ENCODE measurements at regions of chr15 and their contacts with region 1.

Region 1: GRCh38 chr15:57561041-57561711 is 30.5 kb upstream of the MYZAP start:
- DNase-seq: peak; percentile 96
- H3K4me3 ChIP-seq: peak overlapping the region in 1 of 3 experiments; percentile 37
- H3K27ac ChIP-seq: peak overlapping the region; percentile 97
- H3K4me1 ChIP-seq: peaks cover 15% of the 10 kb centered on the region
- H3K27me3 ChIP-seq: no peaks in the 10 kb centered on the region
- CTCF ChIP-seq: peak; percentile 79 to 89
- POLR2A ChIP-seq: no peak

Region 2: DNA sequence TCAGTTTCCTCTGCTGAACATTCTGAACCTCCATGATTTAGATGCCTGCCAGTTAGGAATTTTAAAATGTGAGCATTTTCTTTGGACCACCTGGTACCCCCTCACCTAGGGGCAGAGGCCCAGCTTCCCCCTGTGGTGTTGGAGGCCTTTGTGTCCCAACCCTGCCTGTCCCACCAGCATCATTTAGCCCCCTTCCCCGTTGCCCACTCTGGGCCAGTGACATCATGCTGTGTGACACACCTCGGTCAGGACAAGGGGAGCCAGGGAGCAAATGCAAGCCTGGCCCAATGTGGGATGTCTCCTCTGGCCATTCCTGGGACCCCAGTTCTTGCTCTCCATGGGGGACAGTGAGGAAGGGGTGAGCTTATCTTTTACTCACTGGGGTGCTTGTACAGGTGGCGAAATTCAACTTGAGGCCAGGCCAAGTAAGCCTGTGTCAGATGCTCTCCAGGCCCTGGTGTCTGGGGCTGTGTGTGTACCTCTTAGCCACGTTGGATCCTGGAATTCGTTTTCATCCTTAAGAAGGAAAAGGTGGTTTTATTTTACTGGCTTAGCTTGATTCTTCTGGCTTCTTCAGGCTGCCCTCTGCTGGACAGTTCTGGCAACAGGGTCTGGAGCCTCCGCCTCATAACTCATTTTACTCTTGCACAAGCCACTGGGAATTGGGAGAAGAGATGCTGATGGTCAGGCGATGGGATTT is 19.2 kb before region 1 on chr15:
- CTCF ChIA-PET with region 1: interaction called, 25 read pairs
- POLR2A ChIA-PET with region 1: no interaction called
- dilution Hi-C with region 1: no loop called
- intact Hi-C with region 1: no loop called
- DNase-seq: peak; percentile 77
- H3K4me3 ChIP-seq: no peak overlapping the region
- H3K27ac ChIP-seq: no peak overlapping the region
- H3K4me1 ChIP-seq: peaks cover 6% of the 10 kb centered on the region
- H3K27me3 ChIP-seq: no peaks in the 10 kb centered on the region
- CTCF ChIP-seq: peak; percentile 82 to 91
- POLR2A ChIP-seq: no peak

Region 3: DNA sequence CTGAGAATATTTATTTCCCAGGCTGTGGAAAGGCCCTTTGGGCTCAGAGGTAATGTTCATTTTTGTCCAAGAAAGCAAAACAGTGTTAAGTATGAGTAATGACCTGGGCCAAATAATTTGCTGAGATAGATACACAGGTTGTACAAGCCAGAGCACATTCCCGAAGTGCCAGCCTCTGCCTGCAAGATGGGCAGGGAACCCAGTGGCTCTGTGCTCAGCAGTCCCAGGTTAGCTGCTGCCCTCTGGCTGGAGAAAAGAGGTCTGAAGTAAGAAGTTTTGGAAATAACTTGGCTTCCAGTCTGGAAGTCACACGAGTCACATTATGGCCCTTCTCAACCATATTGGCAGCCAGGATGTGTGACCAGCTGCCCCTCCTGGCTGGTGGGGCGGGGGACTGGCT is 50.8 kb after region 1 on chr15:
- CTCF ChIA-PET with region 1: interaction called, 64 read pairs
- POLR2A ChIA-PET with region 1: no interaction called
- dilution Hi-C with region 1: no loop called
- intact Hi-C with region 1: loop called (anchors 1 kb)
- DNase-seq: peak; percentile 73
- H3K4me3 ChIP-seq: no peak overlapping the region
- H3K27ac ChIP-seq: no peak overlapping the region
- H3K4me1 ChIP-seq: peaks cover 25% of the 10 kb centered on the region
- H3K27me3 ChIP-seq: no peaks in the 10 kb centered on the region
- CTCF ChIP-seq: peak in 1 of 2 donors; percentile 40
- POLR2A ChIP-seq: no peak

Region 4: GRCh38 chr15:57640935-57641682 is 79.9 kb after region 1 on chr15:
- CTCF ChIA-PET with region 1: interaction called, 29 read pairs
- POLR2A ChIA-PET with region 1: no interaction called
- dilution Hi-C with region 1: no loop called
- intact Hi-C with region 1: loop called (anchors 1 kb)
- DNase-seq: peak; percentile 41
- H3K4me3 ChIP-seq: no peak overlapping the region
- H3K27ac ChIP-seq: no peak overlapping the region
- H3K4me1 ChIP-seq: no peaks in the 10 kb centered on the region
- H3K27me3 ChIP-seq: no peaks in the 10 kb centered on the region
- CTCF ChIP-seq: peak; percentile 32 to 46
- POLR2A ChIP-seq: no peak

Region 5: DNA sequence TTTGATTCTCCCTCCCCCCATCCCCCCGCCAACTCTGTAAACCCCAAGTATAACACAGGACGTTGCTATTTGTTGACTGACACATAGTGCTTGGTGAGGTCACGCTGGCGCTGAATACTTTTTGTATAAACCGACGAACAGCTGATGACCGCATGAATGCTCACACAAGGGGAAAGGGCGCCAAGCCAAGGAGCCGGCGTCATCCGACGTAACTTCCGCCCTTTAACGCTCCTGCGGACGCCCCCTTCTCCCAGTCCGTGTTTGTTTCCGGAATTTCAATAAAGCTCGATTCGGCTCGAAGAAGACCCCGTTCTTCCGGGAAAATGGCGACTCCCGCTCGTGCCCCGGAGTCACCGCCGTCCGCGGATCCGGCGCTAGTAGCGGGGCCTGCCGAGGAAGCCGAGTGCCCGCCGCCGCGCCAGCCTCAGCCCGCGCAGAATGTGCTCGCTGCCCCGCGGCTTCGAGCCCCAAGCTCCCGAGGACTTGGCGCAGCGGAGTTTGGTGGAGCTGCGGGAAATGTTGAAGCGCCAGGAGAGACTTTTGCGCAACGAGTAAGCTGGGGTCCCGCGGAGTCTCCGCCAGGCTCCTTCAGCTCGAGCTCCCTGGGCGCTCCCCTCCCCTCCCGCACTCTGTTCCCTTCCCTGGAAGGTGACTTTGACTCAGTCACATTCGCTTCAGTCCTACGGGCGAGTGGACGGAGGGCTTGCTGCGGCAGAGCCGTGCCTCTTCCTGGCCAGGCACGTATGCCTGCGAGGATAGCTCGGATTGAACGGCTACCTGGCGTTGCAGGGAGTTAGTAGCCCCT is 145.4 kb after region 1 on chr15 and contains the start of gene POLR2M:
- CTCF ChIA-PET with region 1: interaction called, 33 read pairs
- POLR2A ChIA-PET with region 1: no interaction called
- dilution Hi-C with region 1: no loop called
- intact Hi-C with region 1: loop called (anchors 1 kb)
- DNase-seq: peak; percentile 99
- H3K4me3 ChIP-seq: peak within 1 kb of the TSS; percentile 18 to 71 (median 59)
- H3K27ac ChIP-seq: peak within 1 kb of the TSS; percentile 74
- H3K4me1 ChIP-seq: peaks cover 16% of the 10 kb centered on the region
- H3K27me3 ChIP-seq: no peaks in the 10 kb centered on the region
- CTCF ChIP-seq: no peak
- POLR2A ChIP-seq: peak; percentile 63
- total RNA-seq, gene POLR2M: 42.5 and 50.6 TPM in 2 replicates

Region 6: GRCh38 chr15:57861036-57861638 is 300.0 kb after region 1 on chr15:
- CTCF ChIA-PET with region 1: interaction called, 21 read pairs
- POLR2A ChIA-PET with region 1: no interaction called
- dilution Hi-C with region 1: no loop called
- intact Hi-C with region 1: loop called (anchors 1 kb)
- DNase-seq: peak; percentile 84
- H3K4me3 ChIP-seq: no peak overlapping the region
- H3K27ac ChIP-seq: peak overlapping the region; percentile 45
- H3K4me1 ChIP-seq: peaks cover 10% of the 10 kb centered on the region
- H3K27me3 ChIP-seq: peaks cover 0 to 2% of the 10 kb centered on the region in 2 experiments
- CTCF ChIP-seq: peak; percentile 58
- POLR2A ChIP-seq: no peak